ENCODE measurements at regions of chr6 and their contacts with region 1.

Region 1: GRCh38 chr6:56843573-56844349 is 111.1 kb upstream of the BEND6 start:
- DNase-seq: peak; percentile 86
- ATAC-seq: peak; percentile 94

Region 2: DNA sequence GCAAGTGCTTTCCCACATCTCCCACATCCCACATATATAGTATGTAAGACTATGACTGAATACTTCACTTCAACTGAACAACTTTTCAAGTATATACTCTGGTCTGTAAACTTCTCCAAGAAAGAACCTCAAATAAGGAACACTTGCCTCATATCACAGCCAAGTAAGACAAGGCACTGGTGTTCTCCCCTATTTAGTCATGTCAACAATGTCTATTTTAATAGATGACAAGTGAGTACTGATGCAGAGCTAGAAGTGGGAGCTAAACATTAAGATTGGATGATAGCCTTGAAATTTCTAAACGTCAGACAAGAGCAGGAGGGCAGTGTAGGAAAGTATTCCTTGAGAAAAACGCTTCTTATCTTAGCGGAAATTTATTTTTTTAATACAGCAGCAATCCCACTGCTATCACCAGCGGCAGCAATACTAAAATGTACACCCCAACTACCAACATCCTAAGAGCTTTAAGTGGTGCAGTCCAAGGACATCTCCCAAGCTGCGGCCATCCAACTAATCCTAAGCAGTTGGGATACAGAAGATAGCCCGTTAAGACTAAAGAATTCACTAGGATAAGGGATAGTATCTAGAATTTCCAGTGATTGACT is 230.4 kb before region 1 on chr6:
- intact Hi-C with region 1: no loop called
- DNase-seq: no peak
- ATAC-seq: no peak

Region 3: GRCh38 chr6:56766806-56767190 is 77.0 kb before region 1 on chr6:
- intact Hi-C with region 1: loop called (anchors 5 kb)
- DNase-seq: no peak
- ATAC-seq: no peak